Thyroid gland (tissue), 4 donors: ENCODE measurements at regions of chr18 and their contacts with region 1.

Region 1: DNA sequence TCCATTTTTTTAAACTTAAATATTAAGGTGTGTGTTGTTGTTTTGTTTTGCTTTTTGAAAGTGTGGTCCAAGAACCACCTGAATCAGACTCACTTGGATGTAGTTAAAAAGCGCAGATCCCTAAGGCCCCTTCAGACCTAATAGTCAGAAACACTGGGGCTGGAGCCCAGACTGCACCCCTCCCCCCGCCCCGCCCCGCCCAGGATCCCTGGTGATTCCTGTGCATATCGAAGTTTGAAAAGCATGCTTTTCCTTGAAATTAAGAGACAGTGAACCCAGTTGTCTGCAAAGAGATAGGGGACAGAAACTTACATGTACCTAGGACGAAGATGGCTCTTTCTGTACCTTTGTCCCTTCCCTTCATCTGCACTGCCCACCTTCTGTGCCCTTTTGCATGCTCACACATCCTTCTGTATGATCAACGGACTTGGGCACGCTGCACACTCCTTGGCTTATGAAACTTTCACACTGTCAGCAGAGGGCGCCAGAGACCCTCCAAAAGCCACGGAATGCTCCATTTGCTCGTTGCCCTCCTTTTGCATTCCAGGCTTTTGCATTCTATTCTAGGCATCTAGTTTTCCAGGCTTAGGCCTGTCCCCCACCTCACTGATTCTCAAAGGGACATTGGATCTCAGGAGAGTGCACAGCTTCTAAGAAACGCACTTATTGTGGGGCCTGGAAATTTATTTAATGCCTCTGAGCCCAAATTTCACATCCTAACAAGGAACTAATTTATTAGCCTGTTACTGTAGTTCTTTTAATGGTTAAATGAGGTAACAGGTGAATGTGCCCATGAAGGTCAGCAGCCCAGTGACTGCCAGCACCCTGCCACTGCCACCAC is 32.8 kb upstream of the SLC14A1 start:
- DNase-seq: peak; percentile 73 to 84
- H3K4me3 ChIP-seq: no peak overlapping the region
- H3K27ac ChIP-seq: no peak overlapping the region
- H3K4me1 ChIP-seq: no peaks in the 10 kb centered on the region
- H3K27me3 ChIP-seq: no peaks in the 10 kb centered on the region
- CTCF ChIP-seq: peak; percentile 28 to 82 (median 74)
- POLR2A ChIP-seq: no peak

Region 2: GRCh38 chr18:45628968-45629958 is 61.9 kb before region 1 on chr18:
- intact Hi-C with region 1: no loop called
- DNase-seq: no peak
- H3K4me3 ChIP-seq: no peak overlapping the region
- H3K27ac ChIP-seq: no peak overlapping the region
- H3K4me1 ChIP-seq: peaks cover 17 to 46% of the 10 kb centered on the region in 2 donors
- H3K27me3 ChIP-seq: no peaks in the 10 kb centered on the region
- CTCF ChIP-seq: no peak
- POLR2A ChIP-seq: no peak

Region 3: GRCh38 chr18:45820106-45820745 is 129.0 kb after region 1 on chr18:
- intact Hi-C with region 1: no loop called
- DNase-seq: no peak
- H3K4me3 ChIP-seq: no peak overlapping the region
- H3K27ac ChIP-seq: no peak overlapping the region
- H3K4me1 ChIP-seq: no peaks in the 10 kb centered on the region
- H3K27me3 ChIP-seq: no peaks in the 10 kb centered on the region
- CTCF ChIP-seq: no peak
- POLR2A ChIP-seq: no peak

Region 4: DNA sequence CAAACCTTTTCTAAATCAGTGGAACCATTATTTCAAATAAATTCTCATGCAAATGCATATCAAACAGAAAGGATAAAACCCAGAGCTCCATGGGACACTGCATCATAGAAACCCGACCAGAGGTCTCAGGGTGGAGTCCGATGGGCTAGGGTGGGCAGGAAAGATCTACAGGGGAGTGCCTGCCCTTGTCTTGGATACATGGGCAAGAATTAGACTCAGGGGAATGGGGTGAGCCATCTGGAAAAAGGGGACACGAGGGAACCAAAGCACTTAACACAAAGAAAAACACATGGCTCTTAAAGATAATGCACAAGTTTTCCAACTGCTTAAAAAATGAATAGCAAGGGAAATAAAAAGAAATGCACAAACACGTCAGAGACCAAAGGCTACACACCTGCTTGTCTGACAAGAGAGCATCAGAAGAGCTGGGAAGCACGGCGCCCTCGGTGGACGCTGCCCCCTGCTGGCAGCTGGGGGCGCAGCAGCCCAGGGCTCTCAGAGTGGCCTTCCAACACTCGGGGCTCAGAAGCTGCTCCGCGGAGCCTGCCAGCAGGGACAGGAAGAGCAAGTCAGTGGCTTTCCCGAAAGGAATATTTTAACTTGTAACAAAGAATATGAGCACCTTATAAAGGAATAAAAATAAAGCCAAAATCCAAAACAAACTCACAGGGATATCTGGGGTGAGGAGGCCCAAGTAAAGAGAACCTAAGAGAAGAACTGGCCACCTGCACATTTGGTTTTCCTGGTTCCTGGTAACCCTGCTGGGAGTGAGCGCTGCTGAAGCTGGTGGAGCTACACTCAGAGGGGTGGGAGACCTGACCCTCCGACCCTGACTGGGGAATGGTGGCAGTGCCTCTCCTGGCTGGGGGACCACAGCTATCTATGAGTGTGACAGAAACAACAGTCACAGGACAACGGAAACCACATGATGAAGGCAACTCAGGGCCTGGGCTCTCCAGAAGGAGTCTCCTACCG is 188.8 kb after region 1 on chr18:
- intact Hi-C with region 1: loop called (anchors 10 kb)
- DNase-seq: peak; percentile 65 to 74
- H3K4me3 ChIP-seq: no peak overlapping the region
- H3K27ac ChIP-seq: no peak overlapping the region
- H3K4me1 ChIP-seq: peaks cover 0 to 4% of the 10 kb centered on the region in 2 donors
- H3K27me3 ChIP-seq: no peaks in the 10 kb centered on the region
- CTCF ChIP-seq: peak; percentile 80 to 97 (median 90)
- POLR2A ChIP-seq: no peak

Region 5: GRCh38 chr18:46073474-46074331 is 382.5 kb after region 1 on chr18:
- intact Hi-C with region 1: loop called (anchors 10 kb)
- DNase-seq: peak; percentile 30 to 38
- H3K4me3 ChIP-seq: no peak overlapping the region
- H3K27ac ChIP-seq: no peak overlapping the region
- H3K4me1 ChIP-seq: peaks cover 6 to 29% of the 10 kb centered on the region in 2 donors
- H3K27me3 ChIP-seq: no peaks in the 10 kb centered on the region
- CTCF ChIP-seq: peak in 5 of 6 experiments; percentile 38 to 66 (median 62)
- POLR2A ChIP-seq: no peak